PC-3 (cell line): ENCODE measurements at regions of chr15 and their contacts with region 1.

Region 1: DNA sequence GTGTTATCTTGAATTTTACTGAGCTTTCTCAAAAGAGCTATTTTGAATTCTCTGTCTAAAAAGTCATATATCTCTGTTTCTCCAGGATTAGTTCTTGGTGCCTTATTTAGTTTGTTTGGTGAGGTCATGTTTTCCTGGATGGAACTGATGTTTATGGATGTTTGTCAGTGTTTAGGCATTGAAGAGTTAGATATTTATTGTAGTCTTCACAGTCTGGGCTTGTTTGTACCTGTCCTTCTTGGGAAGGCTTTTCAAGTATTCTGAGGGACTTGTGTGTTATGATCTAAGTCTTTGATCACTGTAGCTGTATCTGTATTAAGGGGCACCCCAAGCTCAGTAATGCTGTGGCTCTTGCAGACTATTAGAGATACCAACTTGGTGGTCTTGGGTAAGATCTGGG is 10.6 kb upstream of the RAD51 start:
- DNase-seq: no peak
- ATAC-seq: no peak
- H3K4me3 ChIP-seq: no peak overlapping the region
- H3K27ac ChIP-seq: no peak overlapping the region
- H3K4me1 ChIP-seq: 0 out of 2 replicates have a peak, but pooled peaks cover under 1% of the 10 kb centered on the region
- H3K27me3 ChIP-seq: no peaks in the 10 kb centered on the region
- CTCF ChIP-seq: no peak

Region 2: GRCh38 chr15:40454904-40455391 is 229.4 kb before region 1 on chr15:
- CTCF ChIA-PET with region 1: no interaction called
- POLR2A ChIA-PET with region 1: no interaction called
- intact Hi-C with region 1: no loop called
- DNase-seq: peak; percentile 67
- ATAC-seq: peak; percentile 64
- H3K4me3 ChIP-seq: peak overlapping the region; percentile 45; the same call in 1 of the 2 replicates
- H3K27ac ChIP-seq: peak overlapping the region; percentile 61
- H3K4me1 ChIP-seq: peaks cover 21% of the 10 kb centered on the region
- H3K27me3 ChIP-seq: no peaks in the 10 kb centered on the region
- CTCF ChIP-seq: no peak

Region 3: GRCh38 chr15:40506964-40507571 is 177.3 kb before region 1 on chr15:
- CTCF ChIA-PET with region 1: no interaction called
- POLR2A ChIA-PET with region 1: no interaction called
- intact Hi-C with region 1: loop called (anchors 10 kb)
- DNase-seq: peak; percentile 87
- ATAC-seq: peak; percentile 91
- H3K4me3 ChIP-seq: peak overlapping the region; percentile 59
- H3K27ac ChIP-seq: no peak overlapping the region
- H3K4me1 ChIP-seq: peaks cover 13% of the 10 kb centered on the region
- H3K27me3 ChIP-seq: no peaks in the 10 kb centered on the region
- CTCF ChIP-seq: peak; percentile 77

Region 4: DNA sequence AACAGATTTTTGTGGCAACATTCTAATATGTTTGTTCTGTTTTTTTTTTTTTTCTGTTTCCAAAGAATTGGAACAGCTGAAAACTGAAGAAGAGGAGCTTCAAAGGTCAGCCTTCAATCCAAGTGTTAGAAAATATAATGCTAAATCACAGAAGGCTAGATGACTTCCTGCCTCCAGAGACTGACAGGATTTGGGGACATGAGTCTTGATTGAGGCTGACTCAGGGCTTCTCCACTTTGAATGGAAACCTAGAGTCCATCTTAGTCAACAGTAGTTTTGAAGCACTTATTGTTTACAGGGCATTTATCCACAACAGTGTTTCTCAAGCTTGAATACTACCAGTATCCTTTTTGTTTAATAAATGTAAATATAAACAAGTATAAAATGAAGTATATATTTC is 33.9 kb before region 1 on chr15:
- CTCF ChIA-PET with region 1: no interaction called
- POLR2A ChIA-PET with region 1: no interaction called
- intact Hi-C with region 1: no loop called
- DNase-seq: no peak
- ATAC-seq: no peak
- H3K4me3 ChIP-seq: no peak overlapping the region
- H3K27ac ChIP-seq: no peak overlapping the region
- H3K4me1 ChIP-seq: no peaks in the 10 kb centered on the region
- H3K27me3 ChIP-seq: no peaks in the 10 kb centered on the region
- CTCF ChIP-seq: no peak

Region 5: GRCh38 chr15:40694688-40695468 is 10.5 kb after region 1 on chr15 and contains the start of gene RAD51:
- CTCF ChIA-PET with region 1: no interaction called
- POLR2A ChIA-PET with region 1: interaction called, 3 read pairs
- intact Hi-C with region 1: loop called (anchors 2 kb)
- DNase-seq: peak; percentile 94
- ATAC-seq: peak; percentile 90
- H3K4me3 ChIP-seq: peak within 1 kb of the TSS; percentile 77
- H3K27ac ChIP-seq: peak within 1 kb of the TSS; percentile 90
- H3K4me1 ChIP-seq: peaks cover 10% of the 10 kb centered on the region; the same call in 1 of the 2 replicates
- H3K27me3 ChIP-seq: no peaks in the 10 kb centered on the region
- CTCF ChIP-seq: no peak
- total RNA-seq, gene RAD51: 17.3 and 21.9 TPM in 2 replicates

Region 6: GRCh38 chr15:40782580-40783227 is 98.3 kb after region 1 on chr15:
- CTCF ChIA-PET with region 1: no interaction called
- POLR2A ChIA-PET with region 1: no interaction called
- intact Hi-C with region 1: loop called (anchors 2 kb)
- DNase-seq: peak; percentile 90
- ATAC-seq: peak; percentile 90
- H3K4me3 ChIP-seq: no peak overlapping the region
- H3K27ac ChIP-seq: no peak overlapping the region
- H3K4me1 ChIP-seq: peaks cover 28% of the 10 kb centered on the region
- H3K27me3 ChIP-seq: no peaks in the 10 kb centered on the region
- CTCF ChIP-seq: peak; percentile 93